Right ventricle myocardium superior (tissue), 1 donor: ENCODE measurements at regions of chr2 and their contacts with region 1.

Region 1: GRCh38 chr2:68909793-68910674 is 38.8 kb upstream of the BMP10 start:
- DNase-seq: peak; percentile 74
- ATAC-seq: peak; percentile 77

Region 2: GRCh38 chr2:68751397-68752339 is 158.4 kb before region 1 on chr2:
- intact Hi-C with region 1: loop called (anchors 5 kb)
- DNase-seq: peak; percentile 92
- ATAC-seq: peak; percentile 97

Region 3: DNA sequence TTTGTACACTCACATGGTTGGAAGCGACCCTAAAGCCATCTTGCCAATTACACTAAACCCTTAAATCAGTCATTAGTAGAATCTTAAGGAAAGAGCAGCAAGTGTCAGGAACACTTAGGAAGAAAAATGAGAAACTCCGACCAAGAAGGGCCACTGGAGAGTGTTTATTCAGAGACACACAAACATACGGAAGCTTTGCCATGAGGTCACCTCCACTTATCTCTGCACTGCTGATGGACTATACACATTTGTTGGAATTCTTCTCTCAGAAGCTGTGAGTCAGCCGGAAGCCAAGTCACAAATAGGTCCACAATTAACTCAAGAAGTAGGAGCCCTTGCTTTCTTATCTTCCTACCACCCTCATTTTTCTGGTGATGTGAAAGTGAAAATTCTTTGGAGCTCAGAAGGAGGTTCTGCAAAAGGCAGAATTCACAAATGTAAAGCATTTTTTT is 60.4 kb before region 1 on chr2:
- intact Hi-C with region 1: loop called (anchors 10 kb)
- DNase-seq: no peak
- ATAC-seq: no peak